Psoas muscle (tissue), 8 donors: ENCODE measurements at regions of chr6 and their contacts with region 1.

Region 1: DNA sequence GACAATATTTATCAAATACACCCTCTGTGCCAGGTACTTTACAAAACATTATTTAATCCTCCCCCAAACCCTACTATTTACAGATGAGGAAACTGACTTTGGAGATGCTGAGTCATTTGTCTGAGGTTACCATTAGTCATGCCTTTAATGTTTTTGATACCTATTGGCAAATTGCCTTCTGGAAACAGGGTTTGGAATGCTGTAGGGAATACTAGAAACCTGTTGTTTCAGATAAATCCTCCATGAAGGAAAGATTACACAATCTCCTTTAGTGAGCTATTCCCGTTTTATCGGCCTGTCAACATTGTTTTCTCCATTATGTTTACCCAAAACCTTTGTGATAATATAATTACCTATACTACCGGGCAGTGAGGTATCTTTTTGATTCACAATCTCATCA is 93.6 kb upstream of the ADGRF1 start:
- DNase-seq: no peak
- ATAC-seq: peak; percentile 34 to 68 (median 55)
- H3K4me3 ChIP-seq: no peak overlapping the region
- H3K27ac ChIP-seq: peak overlapping the region; percentile 11
- H3K4me1 ChIP-seq: peaks cover 12% of the 10 kb centered on the region
- H3K27me3 ChIP-seq: no peaks in the 10 kb centered on the region
- CTCF ChIP-seq: no peak

Region 2: GRCh38 chr6:46734867-46735719 is 400.7 kb before region 1 on chr6 and contains the start of gene PLA2G7:
- intact Hi-C with region 1: no loop called
- DNase-seq: peak; percentile 15 to 51
- ATAC-seq: peak; percentile 48 to 80 (median 60)
- H3K4me3 ChIP-seq: peak within 1 kb of the TSS; percentile 80
- H3K27ac ChIP-seq: no peak within 1 kb of the TSS
- H3K4me1 ChIP-seq: peaks cover 8% of the 10 kb centered on the region
- H3K27me3 ChIP-seq: peaks cover 0 to 39% (median 3%) of the 10 kb centered on the region in 3 donors
- CTCF ChIP-seq: no peak
- total RNA-seq, gene PLA2G7: 0.38 to 0.66 TPM in 2 of 4 donors, not detected in the others

Region 3: GRCh38 chr6:47168183-47168582 is 32.4 kb after region 1 on chr6:
- intact Hi-C with region 1: loop called in 1 of 2 experiments (anchors 2 kb)
- DNase-seq: peak; percentile 66 to 80
- ATAC-seq: peak; percentile 96 to 99 (median 98)
- H3K4me3 ChIP-seq: no peak overlapping the region
- H3K27ac ChIP-seq: peak overlapping the region; percentile 51
- H3K4me1 ChIP-seq: no peaks in the 10 kb centered on the region
- H3K27me3 ChIP-seq: no peaks in the 10 kb centered on the region
- CTCF ChIP-seq: no peak

Region 4: DNA sequence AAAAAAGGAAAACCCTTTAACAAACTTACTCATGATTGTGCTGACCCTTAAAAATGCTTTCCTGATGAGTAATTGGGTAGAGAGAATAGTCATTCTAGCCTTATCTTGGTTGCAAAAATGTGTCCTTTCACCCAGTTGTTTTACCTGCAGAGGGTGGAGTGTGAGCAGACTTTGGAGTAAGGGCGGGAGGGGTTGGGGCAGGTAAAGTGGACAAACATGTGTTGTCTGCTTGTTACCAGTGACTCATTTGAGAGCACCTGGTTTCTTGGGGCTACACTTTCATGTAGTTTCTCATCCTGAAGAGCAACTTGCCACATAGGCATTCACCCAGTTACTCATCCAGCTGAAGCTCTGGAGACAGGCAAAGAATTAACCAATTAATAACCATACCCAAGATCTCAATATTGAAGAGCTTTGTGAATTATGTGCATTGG is 52.8 kb after region 1 on chr6:
- intact Hi-C with region 1: no loop called
- DNase-seq: no peak
- ATAC-seq: no peak
- H3K4me3 ChIP-seq: no peak overlapping the region
- H3K27ac ChIP-seq: no peak overlapping the region
- H3K4me1 ChIP-seq: no peaks in the 10 kb centered on the region
- H3K27me3 ChIP-seq: no peaks in the 10 kb centered on the region
- CTCF ChIP-seq: no peak